ENCODE measurements at regions of chr15 and their contacts with region 1.

Region 1: GRCh38 chr15:77118882-77119321 is 48.0 kb upstream of the TSPAN3 start:
- DNase-seq: no peak
- ATAC-seq: peak; percentile 75
- H3K4me3 ChIP-seq: no peak overlapping the region
- H3K27ac ChIP-seq: no peak overlapping the region
- H3K4me1 ChIP-seq: no peaks in the 10 kb centered on the region
- H3K27me3 ChIP-seq: no peaks in the 10 kb centered on the region

Region 2: GRCh38 chr15:77496710-77497103 is 377.8 kb after region 1 on chr15:
- intact Hi-C with region 1: loop called in 2 of 4 experiments (anchors 5 to 10 kb)
- DNase-seq: peak; percentile 89 to 96 (median 94)
- ATAC-seq: peak; percentile 88 to 89
- H3K4me3 ChIP-seq: no peak overlapping the region
- H3K27ac ChIP-seq: peak overlapping the region; percentile 99
- H3K4me1 ChIP-seq: peaks cover 26% of the 10 kb centered on the region
- H3K27me3 ChIP-seq: no peaks in the 10 kb centered on the region

Region 3: GRCh38 chr15:77633134-77633912 is 514.4 kb after region 1 on chr15:
- intact Hi-C with region 1: loop called in 1 of 4 experiments (anchors 10 kb)
- DNase-seq: peak; percentile 92 to 97 (median 96)
- ATAC-seq: peak; percentile 92 to 93
- H3K4me3 ChIP-seq: peak overlapping the region; percentile 81
- H3K27ac ChIP-seq: no peak overlapping the region
- H3K4me1 ChIP-seq: no peaks in the 10 kb centered on the region
- H3K27me3 ChIP-seq: no peaks in the 10 kb centered on the region